ENCODE measurements at regions of chr3 and their contacts with region 1.

Region 1: DNA sequence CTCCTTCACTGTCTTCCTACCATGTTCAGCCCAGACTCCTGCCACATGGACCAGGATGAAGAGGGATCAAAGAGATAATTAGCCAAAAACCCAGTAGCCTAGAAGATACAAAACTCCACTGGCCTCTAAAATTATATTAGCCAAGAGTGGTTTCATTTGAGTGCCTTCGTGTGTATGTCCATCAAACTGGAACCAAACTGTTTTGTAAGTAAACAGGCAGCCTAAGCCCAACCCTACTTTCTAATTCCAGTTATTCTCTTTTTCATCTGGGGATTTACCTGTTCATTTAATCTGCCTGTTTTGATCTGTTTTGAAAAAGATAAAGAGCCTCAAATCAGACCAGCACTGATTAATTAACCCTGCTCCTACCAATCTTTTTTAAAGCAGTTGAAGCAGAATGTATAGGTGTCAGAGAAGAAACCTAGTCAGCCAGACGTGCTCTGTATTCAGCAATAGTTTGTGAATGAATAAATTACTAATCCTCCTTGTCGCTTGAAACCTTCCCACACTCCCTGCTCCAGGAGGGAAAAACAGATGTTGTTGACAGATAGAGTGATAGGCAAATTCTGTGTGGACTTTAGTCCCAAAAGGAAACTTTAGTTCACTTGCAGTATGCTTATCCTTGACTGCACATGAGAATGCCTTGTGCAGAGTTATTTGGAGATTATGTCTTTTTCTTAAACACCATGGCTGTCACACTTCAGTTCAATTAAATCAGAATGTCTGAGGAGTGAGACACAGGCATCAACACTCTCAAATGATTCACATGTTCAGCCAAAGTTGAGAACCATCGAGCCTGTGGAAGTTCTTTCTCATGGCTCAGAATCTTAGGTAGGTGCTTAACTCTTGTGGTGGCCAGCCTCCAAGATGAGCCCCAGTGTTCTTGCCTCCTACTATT is 55.5 kb upstream of the ZBED2 start:
- DNase-seq: no peak
- H3K4me3 Mint-ChIP-seq: no peak overlapping the region
- H3K27ac Mint-ChIP-seq: no peak overlapping the region
- H3K4me1 Mint-ChIP-seq: no peaks in the 10 kb centered on the region
- H3K27me3 Mint-ChIP-seq: no peaks in the 10 kb centered on the region
- CTCF ChIP-seq: no peak

Region 2: DNA sequence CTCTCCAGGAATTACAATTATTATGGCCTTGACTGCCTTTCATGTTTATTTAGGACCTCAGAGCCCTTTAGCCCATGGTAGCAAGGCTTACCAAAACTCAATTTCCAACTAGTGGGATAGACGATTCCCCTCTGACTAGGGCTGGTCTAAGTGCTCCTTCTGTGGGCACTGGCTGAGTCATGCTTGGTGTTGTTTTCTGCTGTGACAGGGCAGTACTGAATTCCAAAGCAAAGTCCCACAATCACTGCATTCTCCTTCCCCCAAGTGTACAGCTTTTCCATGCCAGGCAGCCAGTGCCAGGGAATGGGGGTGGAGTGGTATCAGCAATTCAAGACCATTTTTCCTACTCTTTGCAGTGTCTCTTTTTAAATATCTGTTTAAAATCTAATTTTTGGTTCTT is 1088.0 kb before region 1 on chr3:
- CTCF ChIA-PET with region 1: no interaction called
- intact Hi-C with region 1: no loop called
- DNase-seq: no peak
- H3K4me3 Mint-ChIP-seq: no peak overlapping the region
- H3K27ac Mint-ChIP-seq: no peak overlapping the region
- H3K4me1 Mint-ChIP-seq: peaks cover 34% of the 10 kb centered on the region
- H3K27me3 Mint-ChIP-seq: no peaks in the 10 kb centered on the region
- CTCF ChIP-seq: no peak

Region 3: DNA sequence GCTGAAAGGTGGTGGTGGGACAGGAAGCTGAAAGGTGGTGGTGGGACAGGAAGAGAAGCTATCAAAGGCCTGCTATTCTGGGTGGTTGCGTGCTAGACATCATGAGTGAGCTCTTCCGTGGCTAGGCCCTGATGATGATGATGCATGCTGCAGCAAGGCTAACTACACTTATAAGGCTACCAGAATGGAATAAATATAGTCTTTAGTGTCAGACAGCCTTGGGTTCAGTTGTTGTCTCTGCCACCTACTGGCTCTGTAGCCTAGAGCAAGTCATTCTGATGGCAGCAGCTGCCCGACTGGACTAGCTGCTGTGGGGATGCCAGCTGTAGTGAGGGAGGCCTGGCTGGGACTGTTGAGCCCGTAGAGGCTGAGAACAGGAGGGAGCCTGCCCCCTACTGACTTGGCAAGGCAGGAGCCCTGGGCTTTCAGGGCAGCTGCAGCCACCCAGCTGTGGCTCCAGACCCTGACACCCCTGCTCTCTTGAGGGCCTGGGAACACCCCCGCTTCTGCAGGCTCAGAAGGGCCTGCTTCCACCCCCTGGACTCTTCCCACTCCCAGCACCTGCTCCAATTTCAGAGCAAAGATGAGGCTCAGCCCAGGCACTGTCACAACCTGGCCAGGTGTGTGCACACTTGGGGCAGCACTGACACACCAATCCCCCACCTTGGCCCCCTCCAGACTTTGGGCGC is 34.1 kb before region 1 on chr3:
- CTCF ChIA-PET with region 1: no interaction called
- intact Hi-C with region 1: loop called (anchors 2 kb)
- DNase-seq: peak; percentile 67
- H3K4me3 Mint-ChIP-seq: no peak overlapping the region
- H3K27ac Mint-ChIP-seq: no peak overlapping the region
- H3K4me1 Mint-ChIP-seq: no peaks in the 10 kb centered on the region
- H3K27me3 Mint-ChIP-seq: no peaks in the 10 kb centered on the region
- CTCF ChIP-seq: peak; percentile 34

Region 4: GRCh38 chr3:112043603-112044201 is 393.1 kb after region 1 on chr3:
- CTCF ChIA-PET with region 1: no interaction called
- intact Hi-C with region 1: no loop called
- DNase-seq: peak; percentile 59
- H3K4me3 Mint-ChIP-seq: no peak overlapping the region
- H3K27ac Mint-ChIP-seq: no peak overlapping the region
- H3K4me1 Mint-ChIP-seq: peaks cover 24% of the 10 kb centered on the region
- H3K27me3 Mint-ChIP-seq: no peaks in the 10 kb centered on the region
- CTCF ChIP-seq: peak; percentile 38